Esophagus muscularis mucosa (tissue), 4 donors: ENCODE measurements at regions of chr19 and their contacts with region 1.

Region 1: DNA sequence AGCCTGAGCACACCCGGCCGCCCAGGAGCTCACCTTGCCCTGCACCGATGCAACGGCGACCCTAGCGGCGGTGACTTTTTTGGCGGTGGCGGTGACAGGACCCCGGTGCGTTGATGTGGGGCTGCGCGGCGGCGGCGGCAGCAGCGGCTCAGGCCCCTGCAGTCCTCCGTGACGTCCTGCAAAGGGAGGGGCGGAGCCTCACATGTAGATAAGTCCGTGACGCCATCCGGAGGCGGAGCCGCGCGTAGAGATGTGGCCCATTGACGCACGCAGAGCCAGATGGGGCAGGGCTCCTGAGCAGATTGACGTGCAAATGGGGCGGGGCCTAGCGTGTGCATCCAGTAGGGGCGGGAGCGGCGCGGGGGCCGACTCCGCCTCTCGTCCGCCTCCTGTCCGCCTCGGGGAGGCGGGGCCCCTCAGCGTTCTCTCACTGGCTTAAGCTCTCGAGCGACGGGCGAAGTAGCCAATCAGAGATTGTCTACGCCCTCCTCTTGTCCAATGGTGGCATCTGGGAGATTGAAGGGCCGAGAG is at the start of gene RAB3A:
- DNase-seq: peak; percentile 100
- H3K4me3 ChIP-seq: peak within 1 kb of the TSS; percentile 69 to 79 (median 75)
- H3K27ac ChIP-seq: peak within 1 kb of the TSS; percentile 92 to 98 (median 95)
- H3K4me1 ChIP-seq: peaks cover 20 to 41% (median 37%) of the 10 kb centered on the region in 4 donors
- H3K27me3 ChIP-seq: peaks cover 0 to 2% (median 0%) of the 10 kb centered on the region in 4 donors
- CTCF ChIP-seq: peak in 1 of 3 experiments; percentile 13
- EP300 ChIP-seq: peak; percentile 92
- POLR2A ChIP-seq: no peak
- total RNA-seq, gene RAB3A: 1.7 to 2.5 (median 1.9) TPM

Region 2: DNA sequence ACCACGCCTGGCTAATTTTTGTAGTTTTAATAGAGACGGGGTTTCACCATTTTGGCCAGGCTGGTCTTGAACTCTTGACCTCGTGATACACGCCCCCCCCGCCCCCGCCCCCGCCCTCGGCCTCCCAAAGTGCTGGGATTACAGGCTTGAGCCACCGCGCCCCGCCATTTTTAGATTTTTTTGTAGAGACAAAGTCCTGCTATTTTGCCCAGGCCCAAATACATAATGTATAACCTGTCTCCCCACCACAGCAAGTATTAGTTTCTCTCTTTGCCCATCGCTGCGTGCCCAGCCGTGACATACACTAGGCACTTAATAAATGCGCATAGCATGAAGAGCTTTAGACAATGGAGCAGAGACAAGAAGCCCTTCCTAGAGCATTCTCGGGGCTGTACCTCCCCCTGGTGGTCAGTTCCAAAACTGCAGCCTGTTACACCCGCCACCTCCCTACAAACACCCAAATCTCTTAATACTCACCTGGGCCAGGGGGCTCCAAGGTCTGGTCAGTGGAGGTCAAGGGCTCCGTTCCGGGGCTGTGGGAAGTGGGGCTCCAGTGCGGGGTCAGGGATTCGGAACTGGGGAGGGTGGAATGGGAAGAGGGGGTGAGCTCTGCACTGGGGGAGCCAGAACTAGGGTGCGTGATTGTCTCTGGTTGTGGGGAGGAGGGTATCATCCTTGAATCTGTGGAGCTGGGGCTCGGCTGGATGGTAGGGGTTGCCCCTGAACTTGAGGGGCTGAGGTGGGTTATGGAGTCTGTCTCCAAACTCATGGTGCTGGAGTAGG is 47.9 kb after region 1 on chr19:
- intact Hi-C with region 1: loop called (anchors 1 kb)
- DNase-seq: peak; percentile 96
- H3K4me3 ChIP-seq: no peak overlapping the region
- H3K27ac ChIP-seq: no peak overlapping the region
- H3K4me1 ChIP-seq: peaks cover 0 to 3% (median 0%) of the 10 kb centered on the region in 4 donors
- H3K27me3 ChIP-seq: peaks cover 0 to 32% (median 3%) of the 10 kb centered on the region in 4 donors
- CTCF ChIP-seq: peak in 2 of 3 experiments; percentile 95 to 98
- EP300 ChIP-seq: no peak
- POLR2A ChIP-seq: no peak

Region 3: GRCh38 chr19:18542936-18543815 is 339.2 kb after region 1 on chr19 and contains the start of gene FKBP8:
- intact Hi-C with region 1: no loop called
- DNase-seq: peak; percentile 97
- H3K4me3 ChIP-seq: peak within 1 kb of the TSS; percentile 78 to 95 (median 86)
- H3K27ac ChIP-seq: peak within 1 kb of the TSS; percentile 93 to 96 (median 94)
- H3K4me1 ChIP-seq: peaks cover 13 to 25% (median 24%) of the 10 kb centered on the region in 4 donors
- H3K27me3 ChIP-seq: no peaks in the 10 kb centered on the region
- CTCF ChIP-seq: no peak
- EP300 ChIP-seq: no peak
- POLR2A ChIP-seq: no peak
- total RNA-seq, gene FKBP8: 420 to 568 (median 430) TPM